H1 (cell line): ENCODE measurements at regions of chr6 and their contacts with region 1.

Region 1: GRCh38 chr6:30700340-30700739 is 9.6 kb upstream of the NRM start:
- DNase-seq: no peak
- H3K4me3 ChIP-seq: no peak overlapping the region
- H3K27ac ChIP-seq: no peak overlapping the region
- H3K4me1 ChIP-seq: no peaks in the 10 kb centered on the region
- H3K27me3 ChIP-seq: no peaks in the 10 kb centered on the region
- CTCF ChIP-seq: no peak
- EP300 ChIP-seq: no peak
- POLR2A ChIP-seq: no peak
- RAD21 ChIP-seq: no peak

Region 2: GRCh38 chr6:30640476-30640875 is 59.9 kb before region 1 on chr6:
- CTCF ChIA-PET with region 1: no interaction called
- POLR2A ChIA-PET with region 1: no interaction called
- DNase-seq: no peak
- H3K4me3 ChIP-seq: no peak overlapping the region
- H3K27ac ChIP-seq: no peak overlapping the region
- H3K4me1 ChIP-seq: no peaks in the 10 kb centered on the region
- H3K27me3 ChIP-seq: no peaks in the 10 kb centered on the region
- CTCF ChIP-seq: no peak
- EP300 ChIP-seq: no peak
- POLR2A ChIP-seq: no peak
- RAD21 ChIP-seq: no peak

Region 3: GRCh38 chr6:30678964-30679726 is 21.2 kb before region 1 on chr6:
- CTCF ChIA-PET with region 1: interaction called, 10 read pairs
- POLR2A ChIA-PET with region 1: interaction called, 7 read pairs
- DNase-seq: peak in 1 of 2 experiments; percentile 98
- H3K4me3 ChIP-seq: peak overlapping the region in 1 of 4 experiments; percentile 50; a peak in 4 of 8 replicates
- H3K27ac ChIP-seq: no peak overlapping the region
- H3K4me1 ChIP-seq: peaks cover 7 to 17% (median 12%) of the 10 kb centered on the region in 4 experiments
- H3K27me3 ChIP-seq: no peaks in the 10 kb centered on the region
- CTCF ChIP-seq: peak in 2 of 3 experiments; percentile 96 to 97; a peak in 3 of 4 replicates
- EP300 ChIP-seq: no peak; a peak in 1 of 3 replicates
- POLR2A ChIP-seq: no peak
- RAD21 ChIP-seq: peak; percentile 91 to 96

Region 4: GRCh38 chr6:30686908-30687658 is 13.3 kb before region 1 on chr6:
- CTCF ChIA-PET with region 1: interaction called, 14 read pairs
- POLR2A ChIA-PET with region 1: interaction called, 732 read pairs
- DNase-seq: peak in 1 of 2 experiments; percentile 92
- H3K4me3 ChIP-seq: peak overlapping the region; percentile 49 to 97 (median 80)
- H3K27ac ChIP-seq: peak overlapping the region; percentile 35; the same call in 1 of the 2 replicates
- H3K4me1 ChIP-seq: peaks cover 7 to 49% (median 32%) of the 10 kb centered on the region in 4 experiments
- H3K27me3 ChIP-seq: no peaks in the 10 kb centered on the region
- CTCF ChIP-seq: no peak
- EP300 ChIP-seq: peak in 1 of 2 experiments; percentile 94; a peak in 1 of 3 replicates
- POLR2A ChIP-seq: no peak; a peak in 1 of 3 replicates
- RAD21 ChIP-seq: no peak

Region 5: GRCh38 chr6:30711758-30712380 is 11.5 kb after region 1 on chr6:
- CTCF ChIA-PET with region 1: interaction called, 16 read pairs
- POLR2A ChIA-PET with region 1: interaction called, 732 read pairs
- DNase-seq: no peak
- H3K4me3 ChIP-seq: no peak overlapping the region
- H3K27ac ChIP-seq: no peak overlapping the region
- H3K4me1 ChIP-seq: no peaks in the 10 kb centered on the region; a peak in 5 of 7 replicates
- H3K27me3 ChIP-seq: no peaks in the 10 kb centered on the region
- CTCF ChIP-seq: no peak
- EP300 ChIP-seq: no peak
- POLR2A ChIP-seq: no peak
- RAD21 ChIP-seq: no peak